HCT116 (cell line): ENCODE measurements at regions of chr7 and their contacts with region 1.

Region 1: DNA sequence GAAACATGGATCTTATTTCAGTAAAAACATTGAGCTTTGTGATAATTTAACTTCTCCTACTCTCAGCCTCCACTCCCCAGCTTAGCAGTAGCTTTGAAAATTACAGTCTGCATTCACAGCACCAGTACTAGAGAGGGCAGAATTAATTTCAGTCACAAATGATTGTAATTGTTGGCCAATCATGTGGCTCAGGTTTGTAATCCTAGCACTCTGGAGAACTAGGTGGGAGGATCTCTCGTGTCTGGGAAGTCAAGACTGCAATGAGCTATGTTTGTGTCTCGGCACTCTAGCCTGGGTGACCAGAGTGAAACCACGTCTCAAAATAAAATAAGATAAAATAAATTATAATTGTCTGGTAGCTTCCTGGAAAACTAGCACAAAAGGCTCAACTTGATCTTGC is 620.9 kb downstream of the TNS3 start:
- DNase-seq: no peak
- ATAC-seq: no peak
- H3K4me3 ChIP-seq: no peak overlapping the region
- H3K27ac ChIP-seq: no peak overlapping the region
- H3K4me1 ChIP-seq: no peaks in the 10 kb centered on the region
- H3K27me3 ChIP-seq: no peaks in the 10 kb centered on the region
- CTCF ChIP-seq: no peak
- POLR2A ChIP-seq: no peak
- RAD21 ChIP-seq: no peak

Region 2: GRCh38 chr7:47008461-47008860 is 47.5 kb after region 1 on chr7:
- CTCF ChIA-PET with region 1: no interaction called
- POLR2A ChIA-PET with region 1: no interaction called
- RAD21 ChIA-PET with region 1: no interaction called
- intact Hi-C with region 1: loop called (anchors 5 kb)
- DNase-seq: no peak
- ATAC-seq: no peak
- H3K4me3 ChIP-seq: no peak overlapping the region
- H3K27ac ChIP-seq: no peak overlapping the region
- H3K4me1 ChIP-seq: no peaks in the 10 kb centered on the region
- H3K27me3 ChIP-seq: no peaks in the 10 kb centered on the region
- CTCF ChIP-seq: no peak
- POLR2A ChIP-seq: no peak
- RAD21 ChIP-seq: no peak